ENCODE measurements at regions of chr2 and their contacts with region 1.

Region 1: GRCh38 chr2:136362676-136363390 is 244.9 kb upstream of the CXCR4 start:
- DNase-seq: peak; percentile 68
- H3K4me3 Mint-ChIP-seq: no peak overlapping the region
- H3K27ac Mint-ChIP-seq: peak overlapping the region; percentile 42
- H3K4me1 Mint-ChIP-seq: peaks cover 51% of the 10 kb centered on the region
- H3K27me3 Mint-ChIP-seq: peaks cover 4% of the 10 kb centered on the region

Region 2: GRCh38 chr2:136052369-136053362 is 310.2 kb before region 1 on chr2:
- CTCF ChIA-PET with region 1: no interaction called
- intact Hi-C with region 1: loop called (anchors 1 kb)
- DNase-seq: peak; percentile 53
- H3K4me3 Mint-ChIP-seq: peak overlapping the region; percentile 53
- H3K27ac Mint-ChIP-seq: peak overlapping the region; percentile 96
- H3K4me1 Mint-ChIP-seq: peaks cover 88% of the 10 kb centered on the region
- H3K27me3 Mint-ChIP-seq: no peaks in the 10 kb centered on the region

Region 3: GRCh38 chr2:136207030-136207623 is 155.7 kb before region 1 on chr2:
- CTCF ChIA-PET with region 1: no interaction called
- intact Hi-C with region 1: loop called (anchors 1 kb)
- DNase-seq: peak; percentile 61
- H3K4me3 Mint-ChIP-seq: no peak overlapping the region
- H3K27ac Mint-ChIP-seq: peak overlapping the region; percentile 86
- H3K4me1 Mint-ChIP-seq: peaks cover 37% of the 10 kb centered on the region
- H3K27me3 Mint-ChIP-seq: no peaks in the 10 kb centered on the region

Region 4: GRCh38 chr2:136255648-136256463 is 107.0 kb before region 1 on chr2:
- CTCF ChIA-PET with region 1: no interaction called
- intact Hi-C with region 1: loop called (anchors 5 kb)
- DNase-seq: peak; percentile 66
- H3K4me3 Mint-ChIP-seq: no peak overlapping the region
- H3K27ac Mint-ChIP-seq: no peak overlapping the region
- H3K4me1 Mint-ChIP-seq: peaks cover 30% of the 10 kb centered on the region
- H3K27me3 Mint-ChIP-seq: peaks cover 2% of the 10 kb centered on the region

Region 5: DNA sequence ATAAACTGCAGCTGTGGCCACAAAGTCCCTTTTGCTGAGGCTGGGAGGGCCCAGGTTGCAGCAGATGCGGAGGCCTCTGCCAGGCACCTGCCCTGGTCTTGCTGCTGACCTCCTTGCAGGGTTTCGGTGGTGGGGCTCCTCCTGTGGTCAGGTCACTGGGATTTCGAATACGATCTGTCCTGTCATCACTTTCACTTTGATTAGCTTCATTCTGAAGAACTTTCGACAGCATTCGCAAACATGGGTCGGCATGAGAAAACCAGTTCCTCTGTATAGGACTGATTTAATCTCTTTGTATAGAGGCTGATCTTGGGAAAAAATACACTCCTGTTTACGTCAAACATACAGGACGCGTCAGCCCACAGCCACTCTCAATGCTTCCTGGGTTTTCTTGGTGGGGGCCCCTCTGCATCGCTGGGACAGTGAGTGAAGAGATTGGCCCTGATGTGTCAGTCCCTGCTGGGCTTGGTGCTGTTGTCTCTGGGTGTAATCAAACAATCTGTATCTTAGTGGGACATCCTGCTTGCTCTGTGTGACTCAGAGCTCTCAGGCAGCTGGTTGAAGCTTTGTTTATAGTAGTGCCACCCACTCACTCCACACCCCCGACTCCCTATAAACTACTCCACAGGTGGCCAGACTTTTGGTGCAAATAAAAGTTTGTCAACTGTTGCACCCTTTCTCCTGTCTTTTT is 35.5 kb before region 1 on chr2:
- CTCF ChIA-PET with region 1: interaction called, 3 read pairs
- intact Hi-C with region 1: loop called (anchors 1 kb)
- DNase-seq: peak; percentile 89
- H3K4me3 Mint-ChIP-seq: peak overlapping the region; percentile 52
- H3K27ac Mint-ChIP-seq: peak overlapping the region; percentile 82
- H3K4me1 Mint-ChIP-seq: peaks cover 62% of the 10 kb centered on the region
- H3K27me3 Mint-ChIP-seq: no peaks in the 10 kb centered on the region

Region 6: GRCh38 chr2:136765736-136766323 is 403.0 kb after region 1 on chr2:
- CTCF ChIA-PET with region 1: no interaction called
- intact Hi-C with region 1: no loop called
- DNase-seq: no peak
- H3K4me3 Mint-ChIP-seq: peak overlapping the region; percentile 29
- H3K27ac Mint-ChIP-seq: no peak overlapping the region
- H3K4me1 Mint-ChIP-seq: peaks cover 12% of the 10 kb centered on the region
- H3K27me3 Mint-ChIP-seq: peaks cover 54% of the 10 kb centered on the region

Region 7: DNA sequence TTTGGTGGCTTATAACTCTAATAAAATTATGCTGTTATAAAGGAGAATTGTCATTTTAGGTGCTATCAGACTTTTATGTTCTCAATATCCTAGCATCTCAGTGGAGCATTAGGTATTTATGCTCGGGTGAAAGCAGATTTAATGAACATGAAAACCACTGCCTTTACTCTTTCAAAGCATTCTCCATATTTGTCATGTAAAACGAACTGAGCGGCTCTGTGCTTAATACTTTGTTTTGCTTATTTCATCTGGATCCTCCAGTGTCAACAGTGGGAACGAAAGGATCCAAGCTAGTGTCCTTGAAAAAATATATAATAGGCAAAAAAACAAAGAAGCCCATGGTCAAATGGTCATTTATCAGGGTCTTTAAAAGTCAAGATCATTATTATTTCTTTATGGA is 456.0 kb after region 1 on chr2:
- CTCF ChIA-PET with region 1: no interaction called
- intact Hi-C with region 1: no loop called
- DNase-seq: no peak
- H3K4me3 Mint-ChIP-seq: no peak overlapping the region
- H3K27ac Mint-ChIP-seq: no peak overlapping the region
- H3K4me1 Mint-ChIP-seq: no peaks in the 10 kb centered on the region
- H3K27me3 Mint-ChIP-seq: no peaks in the 10 kb centered on the region

Measured in activated naive CD4-positive, alpha-beta T cell treated with anti-CD3 and anti-CD28 coated beads for 36 hours (primary cell).